Posterior vena cava (tissue), 2 donors: ENCODE measurements at regions of chr4 and their contacts with region 1.

Region 1: GRCh38 chr4:137283737-137284136 is 248.6 kb downstream of the PCDH18 start:
- DNase-seq: no peak

Region 2: DNA sequence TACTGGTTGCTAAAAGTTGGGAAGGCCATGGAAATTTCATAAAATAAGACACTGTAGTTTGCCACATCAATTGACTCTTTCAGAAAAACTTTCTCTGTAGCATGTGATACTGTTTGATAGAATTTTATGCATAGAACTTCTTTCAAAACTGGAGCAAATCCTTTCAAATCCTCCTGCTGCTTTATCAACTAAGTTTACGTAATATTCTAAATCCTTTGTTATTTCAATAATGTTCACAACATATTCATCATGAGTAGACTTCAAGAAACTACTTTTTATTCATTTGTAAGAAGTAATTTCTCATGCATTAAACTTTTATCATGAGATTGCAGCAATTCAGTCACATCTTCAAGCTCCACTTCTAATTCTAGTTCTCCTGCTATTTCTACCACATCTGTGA is 49.3 kb after region 1 on chr4:
- intact Hi-C with region 1: no loop called
- DNase-seq: no peak

Region 3: DNA sequence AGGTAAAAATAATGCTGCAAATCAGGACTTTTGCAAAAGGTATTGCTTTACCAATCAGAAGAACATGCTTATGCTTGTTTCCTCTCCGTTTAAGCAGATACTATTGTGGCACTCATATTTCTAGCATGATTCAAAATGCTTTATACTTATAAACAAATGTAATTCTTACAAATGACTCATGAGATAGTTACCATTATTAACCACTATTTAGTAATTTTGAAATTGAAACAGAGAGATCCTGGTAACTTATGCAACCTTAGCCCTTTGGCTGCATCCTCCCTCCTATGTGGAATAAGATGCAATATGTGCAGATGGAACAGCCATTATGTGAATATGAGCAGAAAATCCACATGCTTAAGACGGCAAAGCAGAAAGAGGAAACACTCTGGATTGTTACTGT is 83.9 kb after region 1 on chr4:
- intact Hi-C with region 1: loop called in 1 of 2 experiments (anchors 5 kb)
- DNase-seq: no peak

Region 4: GRCh38 chr4:138972956-138973801 is 1689.4 kb after region 1 on chr4:
- intact Hi-C with region 1: loop called in 1 of 2 experiments (anchors 5 kb)
- DNase-seq: no peak